Natural killer cell (primary cell): ENCODE measurements at regions of chr14 and their contacts with region 1.

Region 1: GRCh38 chr14:71320107-71320733 is 413.0 kb downstream of the PCNX1 start:
- DNase-seq: peak; percentile 94 to 100
- ATAC-seq: peak; percentile 83 to 95 (median 85)
- H3K4me3 ChIP-seq: peak within 1 kb of the TSS; percentile 64
- H3K4me3 Mint-ChIP-seq: peak within 1 kb of the TSS; percentile 93
- H3K27ac ChIP-seq: peak within 1 kb of the TSS; percentile 99
- H3K27ac Mint-ChIP-seq: peak within 1 kb of the TSS; percentile 93 to 94
- H3K4me1 ChIP-seq: peaks cover 16% of the 10 kb centered on the region
- H3K4me1 Mint-ChIP-seq: peaks cover 40 to 43% of the 10 kb centered on the region in 2 donors
- H3K27me3 ChIP-seq: no peaks in the 10 kb centered on the region
- H3K27me3 Mint-ChIP-seq: peaks cover 2 to 3% of the 10 kb centered on the region in 2 donors
- CTCF ChIP-seq: no peak

Region 2: GRCh38 chr14:69398053-69398817 is 1922.0 kb before region 1 on chr14 and contains the starts of genes ERH and SLC39A9:
- intact Hi-C with region 1: loop called (anchors 5 kb)
- DNase-seq: peak; percentile 90 to 97
- ATAC-seq: peak; percentile 85 to 94 (median 88)
- H3K4me3 ChIP-seq: peak within 1 kb of the TSS; percentile 69
- H3K4me3 Mint-ChIP-seq: peak within 1 kb of the TSS; percentile 97
- H3K27ac ChIP-seq: peak within 1 kb of the TSS; percentile 93
- H3K27ac Mint-ChIP-seq: peak within 1 kb of the TSS; percentile 100
- H3K4me1 ChIP-seq: peaks cover 30% of the 10 kb centered on the region
- H3K4me1 Mint-ChIP-seq: peaks cover 46 to 54% of the 10 kb centered on the region in 2 donors
- H3K27me3 ChIP-seq: no peaks in the 10 kb centered on the region
- H3K27me3 Mint-ChIP-seq: no peaks in the 10 kb centered on the region
- CTCF ChIP-seq: no peak
- total RNA-seq, gene ERH: 103 to 120 (median 113) TPM
- total RNA-seq, gene SLC39A9: 30.9 to 34.6 (median 33.0) TPM

Region 3: GRCh38 chr14:71138448-71139293 is 181.5 kb before region 1 on chr14:
- intact Hi-C with region 1: loop called (anchors 5 kb)
- DNase-seq: peak; percentile 57 to 81
- ATAC-seq: peak; percentile 59 to 79 (median 61)
- H3K4me3 ChIP-seq: no peak overlapping the region
- H3K4me3 Mint-ChIP-seq: no peak overlapping the region
- H3K27ac ChIP-seq: no peak overlapping the region
- H3K27ac Mint-ChIP-seq: no peak overlapping the region
- H3K4me1 ChIP-seq: peaks cover 19% of the 10 kb centered on the region
- H3K4me1 Mint-ChIP-seq: peaks cover 5 to 17% of the 10 kb centered on the region in 2 donors
- H3K27me3 ChIP-seq: no peaks in the 10 kb centered on the region
- H3K27me3 Mint-ChIP-seq: peaks cover 0 to 4% of the 10 kb centered on the region in 2 donors
- CTCF ChIP-seq: peak; percentile 85

Region 4: DNA sequence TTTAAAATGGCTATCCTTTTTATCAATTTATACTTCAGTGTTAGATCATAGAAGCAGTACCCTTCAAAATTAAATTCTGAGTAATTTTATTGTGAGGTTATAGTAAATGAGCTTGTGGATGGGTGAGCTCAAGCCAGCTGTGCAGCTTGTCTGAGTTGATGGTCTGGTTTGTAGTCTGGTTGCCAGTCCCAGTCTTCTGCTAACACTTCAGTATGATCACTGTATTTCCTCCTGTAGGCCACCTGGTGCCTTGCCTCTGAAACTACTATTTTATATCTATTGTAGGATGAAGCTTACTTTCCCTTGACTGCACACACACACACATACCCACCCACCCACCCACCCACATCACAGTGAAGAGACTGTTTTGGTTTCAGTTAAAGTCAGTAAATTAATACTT is 83.4 kb after region 1 on chr14:
- intact Hi-C with region 1: loop called (anchors 2 kb)
- DNase-seq: peak in 1 of 2 donors; percentile 58
- ATAC-seq: peak; percentile 63 to 65 (median 64)
- H3K4me3 ChIP-seq: no peak overlapping the region
- H3K4me3 Mint-ChIP-seq: no peak overlapping the region
- H3K27ac ChIP-seq: no peak overlapping the region
- H3K27ac Mint-ChIP-seq: no peak overlapping the region
- H3K4me1 ChIP-seq: peaks cover 12% of the 10 kb centered on the region
- H3K4me1 Mint-ChIP-seq: peaks cover 7 to 15% of the 10 kb centered on the region in 2 donors
- H3K27me3 ChIP-seq: no peaks in the 10 kb centered on the region
- H3K27me3 Mint-ChIP-seq: no peaks in the 10 kb centered on the region
- CTCF ChIP-seq: peak; percentile 23

Region 5: DNA sequence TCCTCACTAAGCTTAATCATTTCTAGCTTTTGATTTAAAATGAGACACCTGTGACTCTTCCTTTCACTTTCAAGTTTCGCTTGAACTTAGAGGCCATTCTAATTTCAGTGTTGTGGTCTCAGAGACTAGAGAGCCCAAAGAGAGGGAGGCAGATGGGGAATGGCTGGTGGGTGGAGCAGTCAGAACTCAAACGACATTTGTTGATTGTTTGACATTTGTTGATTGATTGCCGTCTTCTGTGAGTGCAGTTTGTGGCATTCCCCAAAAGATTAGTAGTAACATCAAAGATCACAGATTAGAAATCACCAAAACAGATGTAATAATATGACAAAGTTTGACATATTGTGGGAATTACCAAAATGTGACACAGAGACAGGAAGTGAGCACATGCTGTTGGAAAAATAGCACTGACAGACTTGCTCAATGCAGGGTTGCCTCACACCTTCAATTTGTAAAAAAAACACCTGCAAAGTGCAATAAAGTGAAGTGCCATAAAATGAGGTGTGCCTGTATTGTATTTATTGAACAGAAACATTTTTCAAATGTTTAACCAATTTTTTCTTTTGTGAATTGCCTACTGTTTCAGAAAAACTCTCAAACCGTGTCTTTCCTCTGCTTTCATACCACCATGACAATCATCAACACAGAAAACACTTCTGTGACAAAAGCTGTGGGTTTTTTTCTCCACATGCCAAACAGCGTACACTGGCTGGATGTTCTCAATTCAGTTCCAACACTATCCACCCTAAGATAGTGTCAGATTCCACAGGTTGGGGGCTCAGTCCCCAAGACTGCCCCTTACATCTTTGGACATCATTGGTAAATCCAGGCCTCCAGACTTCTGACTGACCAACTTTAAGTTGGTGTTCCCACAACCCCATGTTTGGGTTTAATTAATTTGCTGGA is 235.7 kb after region 1 on chr14:
- intact Hi-C with region 1: loop called (anchors 1 kb)
- DNase-seq: peak; percentile 43 to 88
- ATAC-seq: peak; percentile 75 to 86 (median 83)
- H3K4me3 ChIP-seq: no peak overlapping the region
- H3K4me3 Mint-ChIP-seq: peak overlapping the region; percentile 93
- H3K27ac ChIP-seq: peak overlapping the region; percentile 90
- H3K27ac Mint-ChIP-seq: peak overlapping the region; percentile 96 to 100
- H3K4me1 ChIP-seq: peaks cover 9% of the 10 kb centered on the region
- H3K4me1 Mint-ChIP-seq: peaks cover 34 to 42% of the 10 kb centered on the region in 2 donors
- H3K27me3 ChIP-seq: no peaks in the 10 kb centered on the region
- H3K27me3 Mint-ChIP-seq: no peaks in the 10 kb centered on the region
- CTCF ChIP-seq: no peak

Region 6: DNA sequence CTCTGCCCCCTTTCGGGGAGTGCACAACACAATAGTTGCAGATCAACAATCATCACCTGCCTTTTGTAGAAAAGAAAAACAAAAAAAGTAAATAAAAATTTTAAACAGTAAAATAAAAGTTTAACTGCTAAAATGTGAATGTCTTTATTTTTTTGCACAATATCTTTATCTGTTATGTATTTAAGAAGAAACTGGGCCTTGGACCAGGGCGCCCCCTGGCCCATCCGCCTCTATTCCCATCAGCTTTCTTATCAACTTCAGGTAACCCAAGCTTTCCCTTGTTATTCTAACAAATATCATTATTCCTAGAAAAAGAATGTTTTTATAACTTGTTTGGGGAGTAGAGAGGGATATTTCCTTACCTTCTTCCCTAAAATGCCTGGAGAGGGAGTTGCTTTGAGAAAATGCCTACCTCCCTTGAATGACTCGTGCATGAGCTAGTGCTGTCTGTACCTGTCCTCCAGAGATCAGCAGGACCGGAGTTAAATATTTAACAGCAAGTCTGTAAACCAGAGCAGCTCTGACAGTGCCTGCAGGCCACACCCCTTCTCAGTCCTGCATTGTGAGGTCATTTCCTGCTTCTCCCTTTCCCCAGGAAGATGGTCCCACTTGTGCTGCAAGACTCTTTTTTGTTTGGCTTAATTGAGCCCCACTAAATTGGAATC is 419.2 kb after region 1 on chr14:
- intact Hi-C with region 1: loop called (anchors 5 kb)
- DNase-seq: no peak
- ATAC-seq: no peak
- H3K4me3 ChIP-seq: no peak overlapping the region
- H3K4me3 Mint-ChIP-seq: no peak overlapping the region
- H3K27ac ChIP-seq: no peak overlapping the region
- H3K27ac Mint-ChIP-seq: no peak overlapping the region
- H3K4me1 ChIP-seq: no peaks in the 10 kb centered on the region
- H3K4me1 Mint-ChIP-seq: no peaks in the 10 kb centered on the region
- H3K27me3 ChIP-seq: no peaks in the 10 kb centered on the region
- H3K27me3 Mint-ChIP-seq: no peaks in the 10 kb centered on the region
- CTCF ChIP-seq: no peak

Region 7: GRCh38 chr14:71753126-71753830 is 433.1 kb after region 1 on chr14:
- intact Hi-C with region 1: loop called (anchors 2 kb)
- DNase-seq: peak; percentile 64 to 83
- ATAC-seq: peak; percentile 64 to 83 (median 72)
- H3K4me3 ChIP-seq: no peak overlapping the region
- H3K4me3 Mint-ChIP-seq: no peak overlapping the region
- H3K27ac ChIP-seq: no peak overlapping the region
- H3K27ac Mint-ChIP-seq: no peak overlapping the region
- H3K4me1 ChIP-seq: peaks cover 3% of the 10 kb centered on the region
- H3K4me1 Mint-ChIP-seq: peaks cover 0 to 4% of the 10 kb centered on the region in 2 donors
- H3K27me3 ChIP-seq: no peaks in the 10 kb centered on the region
- H3K27me3 Mint-ChIP-seq: peaks cover 0 to 2% of the 10 kb centered on the region in 2 donors
- CTCF ChIP-seq: peak; percentile 93